Gastrocnemius medialis (tissue), 4 donors: ENCODE measurements at regions of chr19 and their contacts with region 1.

Region 1: GRCh38 chr19:18408053-18408476 is 10.6 kb upstream of the LRRC25 start:
- DNase-seq: no peak
- ATAC-seq: peak in 1 of 2 donors; percentile 21
- H3K4me3 ChIP-seq: no peak overlapping the region
- H3K27ac ChIP-seq: no peak overlapping the region
- H3K4me1 ChIP-seq: no peaks in the 10 kb centered on the region
- H3K27me3 ChIP-seq: no peaks in the 10 kb centered on the region
- CTCF ChIP-seq: peak in 3 of 5 experiments; percentile 15 to 40 (median 36)
- POLR2A ChIP-seq: no peak

Region 2: GRCh38 chr19:17966550-17967256 is 441.4 kb before region 1 on chr19 and contains the start of gene KCNN1:
- in situ Hi-C with region 1: no loop called
- intact Hi-C with region 1: no loop called
- DNase-seq: no peak
- ATAC-seq: no peak
- H3K4me3 ChIP-seq: no peak within 1 kb of the TSS
- H3K27ac ChIP-seq: no peak within 1 kb of the TSS
- H3K4me1 ChIP-seq: no peaks in the 10 kb centered on the region
- H3K27me3 ChIP-seq: peaks cover 34 to 53% (median 40%) of the 10 kb centered on the region in 3 donors
- CTCF ChIP-seq: no peak
- POLR2A ChIP-seq: no peak
- total RNA-seq, gene KCNN1: not detected

Region 3: GRCh38 chr19:18388100-18388959 is 19.7 kb before region 1 on chr19:
- in situ Hi-C with region 1: no loop called
- intact Hi-C with region 1: loop called (anchors 1 kb)
- DNase-seq: peak; percentile 49 to 74
- ATAC-seq: peak; percentile 77 to 86
- H3K4me3 ChIP-seq: peak overlapping the region; percentile 37 to 50 (median 48)
- H3K27ac ChIP-seq: peak overlapping the region; percentile 42 to 54 (median 49)
- H3K4me1 ChIP-seq: peaks cover 0 to 9% of the 10 kb centered on the region in 2 donors
- H3K27me3 ChIP-seq: peaks cover 0 to 11% (median 0%) of the 10 kb centered on the region in 3 donors
- CTCF ChIP-seq: peak; percentile 96 to 100 (median 99)
- POLR2A ChIP-seq: peak in 1 of 2 donors; percentile 15

Region 4: GRCh38 chr19:18456974-18457373 is 48.9 kb after region 1 on chr19:
- in situ Hi-C with region 1: no loop called
- intact Hi-C with region 1: no loop called
- DNase-seq: peak; percentile 67 to 89
- ATAC-seq: peak in 1 of 2 donors; percentile 42
- H3K4me3 ChIP-seq: no peak overlapping the region
- H3K27ac ChIP-seq: peak overlapping the region; percentile 89 to 96 (median 94)
- H3K4me1 ChIP-seq: peaks cover 52 to 56% of the 10 kb centered on the region in 2 donors
- H3K27me3 ChIP-seq: no peaks in the 10 kb centered on the region
- CTCF ChIP-seq: no peak
- POLR2A ChIP-seq: no peak